ENCODE measurements at regions of chr7 and their contacts with region 1.

Region 1: DNA sequence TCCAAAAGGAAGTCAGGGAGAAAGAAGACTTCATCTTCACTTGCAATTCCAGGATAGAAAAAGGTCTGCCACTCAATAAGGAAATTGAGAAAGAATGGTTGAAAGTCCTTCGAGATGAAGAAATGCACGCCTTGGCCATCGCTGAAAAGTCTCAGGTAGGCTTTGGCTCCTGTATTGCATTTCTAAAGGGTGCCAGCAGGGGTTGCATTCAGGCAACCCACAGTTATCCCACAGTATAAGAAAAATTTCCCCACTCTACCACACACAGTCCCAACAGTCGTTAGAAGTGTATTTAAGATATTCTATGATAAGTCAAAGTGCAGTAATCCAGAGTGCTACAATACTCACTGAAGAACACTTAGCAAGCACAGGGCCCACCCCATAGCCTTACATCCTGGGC is 93.4 kb upstream of the FGL2 start:
- DNase-seq: peak in 1 of 2 experiments; percentile 18
- H3K4me3 ChIP-seq: no peak overlapping the region
- H3K4me3 Mint-ChIP-seq: no peak overlapping the region
- H3K27ac Mint-ChIP-seq: no peak overlapping the region
- H3K4me1 ChIP-seq: no peaks in the 10 kb centered on the region
- H3K4me1 Mint-ChIP-seq: no peaks in the 10 kb centered on the region
- H3K27me3 ChIP-seq: no peaks in the 10 kb centered on the region
- H3K27me3 Mint-ChIP-seq: peaks cover 2% of the 10 kb centered on the region
- CTCF ChIP-seq: peak; percentile 20 to 43

Region 2: GRCh38 chr7:77321300-77321699 is 28.3 kb after region 1 on chr7:
- CTCF ChIA-PET with region 1: no interaction called
- POLR2A ChIA-PET with region 1: no interaction called
- intact Hi-C with region 1: no loop called
- DNase-seq: no peak
- H3K4me3 ChIP-seq: no peak overlapping the region
- H3K4me3 Mint-ChIP-seq: no peak overlapping the region
- H3K27ac Mint-ChIP-seq: no peak overlapping the region
- H3K4me1 ChIP-seq: peaks cover 7% of the 10 kb centered on the region
- H3K4me1 Mint-ChIP-seq: no peaks in the 10 kb centered on the region
- H3K27me3 ChIP-seq: no peaks in the 10 kb centered on the region
- H3K27me3 Mint-ChIP-seq: no peaks in the 10 kb centered on the region
- CTCF ChIP-seq: no peak

Region 3: GRCh38 chr7:77960336-77960735 is 667.3 kb after region 1 on chr7:
- CTCF ChIA-PET with region 1: no interaction called
- POLR2A ChIA-PET with region 1: no interaction called
- intact Hi-C with region 1: loop called (anchors 5 kb)
- DNase-seq: no peak
- H3K4me3 ChIP-seq: no peak overlapping the region
- H3K4me3 Mint-ChIP-seq: no peak overlapping the region
- H3K27ac Mint-ChIP-seq: no peak overlapping the region
- H3K4me1 ChIP-seq: no peaks in the 10 kb centered on the region
- H3K4me1 Mint-ChIP-seq: no peaks in the 10 kb centered on the region
- H3K27me3 ChIP-seq: no peaks in the 10 kb centered on the region
- H3K27me3 Mint-ChIP-seq: no peaks in the 10 kb centered on the region
- CTCF ChIP-seq: no peak

Measured in Caco-2 (cell line).